ENCODE measurements at regions of chr1 and their contacts with region 1.

Region 1: DNA sequence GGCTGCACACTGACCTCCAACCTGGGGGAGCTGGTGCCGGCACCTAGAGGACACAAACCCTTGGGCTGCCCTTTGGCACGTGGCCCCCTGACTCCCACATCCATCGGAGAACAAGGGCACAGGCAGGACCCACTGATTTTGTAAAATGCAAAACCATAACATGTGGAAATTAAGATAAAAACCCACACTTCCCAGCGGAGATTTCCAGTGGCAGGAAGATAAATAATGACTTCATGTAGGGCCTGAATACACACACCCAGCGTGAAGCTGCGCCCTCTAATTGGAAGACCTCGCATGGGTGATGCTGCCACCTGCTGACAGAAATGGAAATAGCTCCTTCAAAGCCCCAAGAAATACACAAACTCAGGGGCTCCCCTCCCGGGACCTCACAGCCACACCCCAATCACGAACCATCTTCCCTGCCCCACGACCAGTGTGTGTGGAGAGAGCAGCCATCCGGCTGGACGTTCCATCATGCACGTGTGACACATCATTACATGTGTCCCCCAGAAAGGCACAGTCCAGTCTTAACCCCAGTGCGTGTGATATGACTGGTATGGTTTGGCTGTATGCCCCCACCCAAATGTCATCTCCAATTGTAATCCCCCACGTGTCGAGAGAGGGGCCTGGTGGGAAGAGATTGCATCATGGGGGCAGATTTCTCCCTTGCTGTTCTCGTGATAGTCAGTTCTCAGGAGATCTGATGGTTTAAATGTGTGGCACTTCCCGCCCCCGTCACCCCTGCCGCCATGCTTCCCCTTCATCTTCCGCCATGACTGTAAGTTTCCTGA is 5.7 kb upstream of the TPRG1L start:
- DNase-seq: peak; percentile 67 to 91
- ATAC-seq: peak; percentile 83 to 97 (median 92)
- H3K4me3 ChIP-seq: no peak overlapping the region
- H3K4me3 Mint-ChIP-seq: no peak overlapping the region
- H3K27ac ChIP-seq: no peak overlapping the region
- H3K27ac Mint-ChIP-seq: no peak overlapping the region
- H3K4me1 ChIP-seq: peaks cover 30% of the 10 kb centered on the region
- H3K4me1 Mint-ChIP-seq: peaks cover 35 to 38% of the 10 kb centered on the region in 2 donors
- H3K27me3 ChIP-seq: no peaks in the 10 kb centered on the region
- H3K27me3 Mint-ChIP-seq: peaks cover 0 to 5% of the 10 kb centered on the region in 2 donors
- CTCF ChIP-seq: peak; percentile 83

Region 2: DNA sequence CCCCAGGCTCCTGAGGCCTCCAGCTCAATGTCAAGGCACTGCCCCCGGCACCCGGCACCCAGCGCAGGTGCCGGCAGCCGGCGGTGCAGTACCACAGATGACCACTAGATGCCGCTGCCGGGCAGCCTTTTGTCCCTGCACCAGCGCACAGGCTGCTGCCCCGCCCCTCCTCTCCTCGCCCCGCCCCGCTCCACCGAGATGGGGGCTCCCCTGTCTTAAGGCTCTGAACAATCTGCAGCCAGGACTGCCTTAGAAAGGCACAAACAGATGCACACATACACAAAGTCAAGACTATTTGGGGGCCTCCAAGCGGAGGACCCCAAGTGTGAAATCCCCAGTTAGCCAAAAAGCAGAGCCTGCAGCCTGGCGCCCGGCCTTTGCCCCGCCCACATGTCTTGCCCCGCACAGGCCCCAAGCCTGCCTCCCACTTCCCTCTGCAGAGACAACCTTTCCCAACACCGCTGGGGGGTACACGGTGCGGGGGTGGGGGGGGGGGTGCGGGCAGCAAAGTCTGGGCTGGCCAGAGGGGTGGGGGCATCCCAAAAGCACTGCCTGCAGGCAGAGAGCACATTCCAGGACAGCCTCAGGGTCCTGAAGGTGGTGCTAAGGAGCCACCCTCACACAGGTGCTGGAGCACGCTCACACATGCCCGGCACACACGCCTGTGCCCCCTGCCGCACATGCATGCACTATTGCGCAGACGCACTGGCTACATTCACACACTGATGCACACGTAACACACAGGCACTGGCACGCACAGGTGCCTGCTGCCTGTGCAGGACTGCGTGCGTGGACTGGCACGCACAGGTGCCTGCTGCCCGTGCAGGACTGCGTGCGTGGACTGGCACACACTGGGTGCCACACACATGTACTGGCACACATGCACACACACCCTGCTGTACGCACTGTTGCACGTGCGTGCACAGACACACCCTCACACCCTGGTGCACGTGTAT is 127.5 kb before region 1 on chr1:
- intact Hi-C with region 1: loop called (anchors 1 kb)
- DNase-seq: peak; percentile 84 to 88
- ATAC-seq: peak; percentile 94 to 99 (median 98)
- H3K4me3 ChIP-seq: no peak overlapping the region
- H3K4me3 Mint-ChIP-seq: no peak overlapping the region
- H3K27ac ChIP-seq: no peak overlapping the region
- H3K27ac Mint-ChIP-seq: no peak overlapping the region
- H3K4me1 ChIP-seq: peaks cover 6% of the 10 kb centered on the region
- H3K4me1 Mint-ChIP-seq: peaks cover 6 to 7% of the 10 kb centered on the region in 2 donors
- H3K27me3 ChIP-seq: no peaks in the 10 kb centered on the region
- H3K27me3 Mint-ChIP-seq: peaks cover 0 to 4% of the 10 kb centered on the region in 2 donors
- CTCF ChIP-seq: peak; percentile 99

Region 3: DNA sequence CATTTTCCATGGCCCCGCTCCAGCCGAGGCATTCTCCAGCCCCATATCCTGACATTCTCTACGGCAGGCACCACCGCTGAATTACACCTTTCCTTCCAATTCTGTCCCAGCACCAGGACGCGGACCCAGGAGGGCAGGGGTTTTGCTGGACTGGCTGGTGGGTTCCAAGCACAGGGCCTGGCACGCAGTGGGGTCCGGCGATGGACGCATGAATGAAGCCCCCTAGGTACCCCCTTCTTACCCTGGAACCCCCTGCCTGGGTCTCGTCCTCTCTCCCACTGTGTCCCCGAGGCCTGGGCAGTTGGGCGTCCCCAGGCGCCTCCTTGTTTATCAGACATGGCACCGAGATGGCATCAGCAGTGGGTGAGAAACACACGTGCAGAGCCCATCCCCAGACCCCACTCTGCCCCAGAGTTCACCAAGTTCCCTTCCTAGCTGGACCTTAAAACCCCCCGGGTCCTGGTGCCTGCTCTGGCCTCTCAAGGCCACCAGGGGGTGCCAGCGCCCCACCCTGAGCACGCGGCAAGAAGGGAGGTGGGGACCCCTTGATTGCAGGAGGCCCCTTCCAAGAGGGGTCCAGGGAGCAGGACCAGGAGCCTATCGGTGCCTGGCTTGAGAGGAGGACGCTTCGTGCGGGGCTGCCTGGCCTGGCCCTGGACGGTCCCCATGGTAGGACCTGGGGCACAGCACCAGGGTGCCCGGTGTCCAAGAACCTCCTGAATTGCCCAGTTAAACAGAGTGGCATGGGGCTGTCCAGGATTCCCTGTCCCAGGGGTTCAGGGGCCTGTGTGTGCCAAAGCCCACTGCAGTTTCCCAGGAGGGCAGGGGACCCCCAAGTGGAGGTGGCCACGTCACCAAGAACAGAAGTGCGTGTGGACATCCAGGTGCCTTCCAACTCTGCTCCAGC is 53.9 kb before region 1 on chr1:
- intact Hi-C with region 1: loop called (anchors 1 kb)
- DNase-seq: peak; percentile 33 to 70
- ATAC-seq: peak; percentile 34 to 74 (median 71)
- H3K4me3 ChIP-seq: no peak overlapping the region
- H3K4me3 Mint-ChIP-seq: no peak overlapping the region
- H3K27ac ChIP-seq: no peak overlapping the region
- H3K27ac Mint-ChIP-seq: no peak overlapping the region
- H3K4me1 ChIP-seq: no peaks in the 10 kb centered on the region
- H3K4me1 Mint-ChIP-seq: no peaks in the 10 kb centered on the region
- H3K27me3 ChIP-seq: no peaks in the 10 kb centered on the region
- H3K27me3 Mint-ChIP-seq: no peaks in the 10 kb centered on the region
- CTCF ChIP-seq: peak; percentile 84

Region 4: GRCh38 chr1:3588395-3588794 is 30.7 kb before region 1 on chr1:
- intact Hi-C with region 1: loop called (anchors 1 kb)
- DNase-seq: no peak
- ATAC-seq: peak in 1 of 3 donors; percentile 44
- H3K4me3 ChIP-seq: no peak overlapping the region
- H3K4me3 Mint-ChIP-seq: no peak overlapping the region
- H3K27ac ChIP-seq: no peak overlapping the region
- H3K27ac Mint-ChIP-seq: peak overlapping the region in 1 of 2 donors; percentile 69
- H3K4me1 ChIP-seq: no peaks in the 10 kb centered on the region
- H3K4me1 Mint-ChIP-seq: peaks cover 0 to 14% of the 10 kb centered on the region in 2 donors
- H3K27me3 ChIP-seq: no peaks in the 10 kb centered on the region
- H3K27me3 Mint-ChIP-seq: no peaks in the 10 kb centered on the region
- CTCF ChIP-seq: no peak

Region 5: GRCh38 chr1:3676581-3677470 is 57.8 kb after region 1 on chr1:
- intact Hi-C with region 1: no loop called
- DNase-seq: peak in 1 of 2 donors; percentile 14
- ATAC-seq: no peak
- H3K4me3 ChIP-seq: no peak overlapping the region
- H3K4me3 Mint-ChIP-seq: no peak overlapping the region
- H3K27ac ChIP-seq: peak overlapping the region; percentile 17
- H3K27ac Mint-ChIP-seq: no peak overlapping the region
- H3K4me1 ChIP-seq: peaks cover 36% of the 10 kb centered on the region
- H3K4me1 Mint-ChIP-seq: peaks cover 0 to 14% of the 10 kb centered on the region in 2 donors
- H3K27me3 ChIP-seq: no peaks in the 10 kb centered on the region
- H3K27me3 Mint-ChIP-seq: peaks cover 0 to 8% of the 10 kb centered on the region in 2 donors
- CTCF ChIP-seq: no peak

Measured in natural killer cell (primary cell).